ENCODE measurements at regions of chr2 and their contacts with region 1.

Region 1: DNA sequence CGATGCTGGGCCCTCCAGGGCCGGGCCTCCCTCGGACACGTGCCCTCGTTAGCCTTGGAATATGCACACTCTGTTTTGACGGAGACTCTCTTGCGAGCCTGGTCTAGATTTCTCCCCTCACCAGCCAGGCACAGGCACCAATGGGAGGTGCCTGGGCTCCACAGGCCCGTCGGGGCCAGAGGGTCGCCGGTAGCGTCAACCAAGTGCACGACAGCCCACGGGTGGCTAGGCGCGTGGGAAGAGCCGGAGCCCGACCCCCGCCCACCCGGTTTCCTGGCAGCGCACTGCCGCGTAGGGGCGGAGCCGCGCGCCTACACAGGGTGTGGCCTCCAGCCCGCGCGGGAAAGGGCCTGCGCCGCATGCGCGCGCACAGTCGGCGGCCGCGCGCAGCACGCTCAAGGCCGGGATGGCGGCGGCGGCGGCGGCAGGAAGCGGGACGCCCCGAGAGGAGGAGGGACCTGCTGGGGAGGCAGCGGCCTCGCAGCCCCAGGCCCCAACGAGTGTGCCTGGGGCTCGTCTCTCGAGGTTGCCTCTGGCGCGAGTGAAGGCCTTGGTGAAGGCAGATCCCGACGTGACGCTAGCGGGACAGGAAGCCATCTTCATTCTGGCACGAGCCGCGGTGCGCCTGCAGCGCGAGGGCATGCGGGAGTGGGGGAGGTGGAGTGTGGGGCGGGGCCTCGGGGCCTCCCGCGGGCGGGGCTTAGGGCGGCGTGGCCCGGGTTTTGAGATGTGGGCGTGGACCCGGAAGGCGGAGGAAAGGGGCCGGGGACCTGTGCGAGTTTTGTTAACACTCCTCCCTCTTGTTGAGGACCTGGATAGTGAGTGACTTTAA is at the start of gene POLE4:
- DNase-seq: peak; percentile 89 to 96 (median 95)
- ATAC-seq: peak; percentile 95
- H3K4me3 ChIP-seq: peak within 1 kb of the TSS; percentile 78
- H3K4me3 Mint-ChIP-seq: peak within 1 kb of the TSS; percentile 70 to 88 (median 85)
- H3K27ac ChIP-seq: peak within 1 kb of the TSS; percentile 87
- H3K27ac Mint-ChIP-seq: peak within 1 kb of the TSS; percentile 70 to 96 (median 89)
- H3K4me1 ChIP-seq: peaks cover 9 to 14% of the 10 kb centered on the region in 2 donors
- H3K4me1 Mint-ChIP-seq: peaks cover 30 to 87% (median 65%) of the 10 kb centered on the region in 7 donors
- H3K27me3 ChIP-seq: no peaks in the 10 kb centered on the region
- H3K27me3 Mint-ChIP-seq: no peaks in the 10 kb centered on the region
- total RNA-seq, gene POLE4: 37.8 to 49.1 (median 43.6) TPM

Region 2: DNA sequence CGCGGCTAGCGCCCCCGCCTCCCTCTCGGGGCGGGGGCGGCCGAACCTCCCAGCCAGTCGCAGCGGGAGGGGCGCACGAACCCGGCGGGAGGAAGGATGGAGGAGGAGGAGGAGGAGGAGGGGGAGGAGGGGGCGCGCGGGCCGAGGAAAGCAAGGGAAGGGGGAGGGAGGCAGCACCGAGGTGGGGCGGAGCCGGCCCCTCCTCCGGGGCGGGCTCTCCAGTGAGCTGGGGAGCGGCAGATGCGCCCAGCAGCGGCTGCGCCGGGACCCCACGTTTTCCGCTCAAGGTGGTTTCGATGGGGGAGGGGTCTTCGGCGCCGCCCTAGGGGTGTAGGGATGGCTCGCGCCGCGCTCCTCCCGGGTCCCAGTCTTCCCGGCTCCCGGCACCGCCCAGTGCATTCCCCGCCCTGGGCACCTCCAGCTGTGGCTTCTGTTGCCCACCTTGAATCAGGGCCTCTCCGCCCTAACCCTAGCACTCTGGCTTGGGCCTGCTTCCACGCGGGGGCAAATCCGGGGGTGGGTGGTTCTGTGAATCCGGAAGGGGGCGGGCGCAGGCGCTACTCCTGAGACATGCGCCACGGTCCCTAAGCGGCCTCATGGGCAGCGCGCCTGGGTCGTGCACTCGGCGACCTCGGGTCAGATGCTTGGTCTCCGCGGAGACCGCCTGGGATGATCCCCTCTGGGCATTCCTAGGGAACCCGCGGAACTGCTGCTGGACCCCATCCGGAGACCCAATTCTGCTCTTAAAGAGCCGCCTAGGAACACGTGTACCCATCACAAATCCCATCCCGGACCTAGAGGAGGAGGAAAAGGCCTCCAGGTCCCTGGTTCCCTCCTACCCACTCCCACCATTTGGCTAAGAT is 1674.0 kb before region 1 on chr2 and contains the start of gene FBXO41:
- CTCF ChIA-PET with region 1: no interaction called
- POLR2A ChIA-PET with region 1: no interaction called
- intact Hi-C with region 1: loop called (anchors 1 to 10 kb)
- DNase-seq: peak; percentile 43 to 79 (median 61)
- ATAC-seq: peak; percentile 81
- H3K4me3 ChIP-seq: peak within 1 kb of the TSS; percentile 69
- H3K4me3 Mint-ChIP-seq: peak within 1 kb of the TSS; percentile 72 to 91 (median 85)
- H3K27ac ChIP-seq: peak within 1 kb of the TSS; percentile 61
- H3K27ac Mint-ChIP-seq: peak within 1 kb of the TSS in 7 of 9 donors; percentile 32 to 87 (median 58)
- H3K4me1 ChIP-seq: peaks cover 12 to 14% of the 10 kb centered on the region in 2 donors
- H3K4me1 Mint-ChIP-seq: peaks cover 6 to 26% (median 19%) of the 10 kb centered on the region in 7 donors
- H3K27me3 ChIP-seq: no peaks in the 10 kb centered on the region
- H3K27me3 Mint-ChIP-seq: peaks cover 0 to 34% (median 14%) of the 10 kb centered on the region in 5 donors
- total RNA-seq, gene FBXO41: 13.2 to 19.6 (median 17.6) TPM

Region 3: GRCh38 chr2:74399785-74400184 is 558.7 kb before region 1 on chr2:
- CTCF ChIA-PET with region 1: no interaction called
- POLR2A ChIA-PET with region 1: no interaction called
- intact Hi-C with region 1: no loop called
- DNase-seq: peak in 5 of 9 donors; percentile 36 to 47 (median 42)
- ATAC-seq: peak; percentile 86
- H3K4me3 ChIP-seq: no peak overlapping the region
- H3K4me3 Mint-ChIP-seq: no peak overlapping the region
- H3K27ac ChIP-seq: no peak overlapping the region
- H3K27ac Mint-ChIP-seq: peak overlapping the region in 2 of 9 donors; percentile 8 to 28
- H3K4me1 ChIP-seq: no peaks in the 10 kb centered on the region
- H3K4me1 Mint-ChIP-seq: peaks cover 0 to 6% (median 5%) of the 10 kb centered on the region in 7 donors
- H3K27me3 ChIP-seq: no peaks in the 10 kb centered on the region
- H3K27me3 Mint-ChIP-seq: peaks cover 0 to 21% (median 4%) of the 10 kb centered on the region in 5 donors

Region 4: GRCh38 chr2:74653985-74654882 is 304.3 kb before region 1 on chr2 and contains the start of gene SEMA4F:
- CTCF ChIA-PET with region 1: no interaction called
- POLR2A ChIA-PET with region 1: no interaction called
- intact Hi-C with region 1: loop called (anchors 1 kb)
- DNase-seq: peak; percentile 85 to 95 (median 92)
- ATAC-seq: peak; percentile 100
- H3K4me3 ChIP-seq: peak within 1 kb of the TSS; percentile 86
- H3K4me3 Mint-ChIP-seq: peak within 1 kb of the TSS; percentile 82 to 97 (median 90)
- H3K27ac ChIP-seq: peak within 1 kb of the TSS; percentile 75
- H3K27ac Mint-ChIP-seq: peak within 1 kb of the TSS in 8 of 9 donors; percentile 59 to 96 (median 85)
- H3K4me1 ChIP-seq: peaks cover 6 to 8% of the 10 kb centered on the region in 2 donors
- H3K4me1 Mint-ChIP-seq: peaks cover 12 to 34% (median 23%) of the 10 kb centered on the region in 7 donors
- H3K27me3 ChIP-seq: no peaks in the 10 kb centered on the region
- H3K27me3 Mint-ChIP-seq: peaks cover 3 to 21% (median 5%) of the 10 kb centered on the region in 5 donors
- total RNA-seq, gene SEMA4F: 5.7 to 23.6 (median 11.0) TPM

Region 5: GRCh38 chr2:74845217-74846011 is 113.1 kb before region 1 on chr2:
- CTCF ChIA-PET with region 1: no interaction called
- POLR2A ChIA-PET with region 1: interaction called, 3 read pairs
- intact Hi-C with region 1: loop called in 1 of 2 experiments (anchors 1 kb)
- DNase-seq: peak in 2 of 9 donors; percentile 23 to 51
- ATAC-seq: peak; percentile 70
- H3K4me3 ChIP-seq: peak overlapping the region; percentile 29
- H3K4me3 Mint-ChIP-seq: peak overlapping the region; percentile 65 to 87 (median 78)
- H3K27ac ChIP-seq: peak overlapping the region; percentile 39
- H3K27ac Mint-ChIP-seq: peak overlapping the region; percentile 85 to 99 (median 94)
- H3K4me1 ChIP-seq: peaks cover 37 to 97% of the 10 kb centered on the region in 2 donors
- H3K4me1 Mint-ChIP-seq: peaks cover 75 to 100% (median 97%) of the 10 kb centered on the region in 7 donors
- H3K27me3 ChIP-seq: no peaks in the 10 kb centered on the region
- H3K27me3 Mint-ChIP-seq: no peaks in the 10 kb centered on the region

Region 6: DNA sequence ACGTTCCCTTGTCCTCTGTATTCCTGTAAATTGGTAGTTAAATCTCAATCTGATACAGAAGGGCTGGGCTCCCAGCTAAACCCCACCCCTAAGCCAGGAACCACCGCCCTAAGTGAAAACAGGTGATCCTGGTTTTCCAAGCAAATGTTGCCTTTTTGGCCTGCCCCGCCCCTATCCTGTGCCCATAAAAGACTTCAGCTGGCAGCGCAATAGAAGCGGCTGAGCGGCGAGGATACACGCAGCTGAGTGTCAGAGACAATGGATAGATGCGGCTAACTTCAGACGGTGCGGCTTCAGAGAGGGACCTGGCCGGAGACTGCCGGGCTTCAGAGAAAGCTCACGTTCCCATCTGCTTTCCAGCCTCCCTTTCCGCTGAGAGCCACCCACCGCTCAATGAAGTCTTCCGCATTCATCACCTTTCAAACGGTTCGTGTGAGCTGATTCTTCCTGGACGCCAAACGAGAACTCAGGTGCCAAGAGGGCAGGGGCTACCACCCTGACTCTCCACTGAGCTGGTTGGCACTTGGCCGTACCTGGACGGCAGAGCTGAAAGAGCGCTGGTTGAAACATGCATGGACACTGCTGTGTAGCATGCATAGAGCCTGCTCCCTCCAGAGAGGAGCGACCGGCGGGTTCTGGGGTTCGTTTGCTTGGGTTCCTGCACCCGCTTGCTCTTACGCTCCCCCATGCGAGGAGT is 49.6 kb before region 1 on chr2:
- CTCF ChIA-PET with region 1: no interaction called
- POLR2A ChIA-PET with region 1: no interaction called
- intact Hi-C with region 1: no loop called
- DNase-seq: no peak
- ATAC-seq: no peak
- H3K4me3 ChIP-seq: no peak overlapping the region
- H3K4me3 Mint-ChIP-seq: peak overlapping the region in 6 of 10 donors; percentile 33 to 64 (median 40)
- H3K27ac ChIP-seq: no peak overlapping the region
- H3K27ac Mint-ChIP-seq: no peak overlapping the region
- H3K4me1 ChIP-seq: peaks cover 0 to 4% of the 10 kb centered on the region in 2 donors
- H3K4me1 Mint-ChIP-seq: peaks cover 2 to 20% (median 14%) of the 10 kb centered on the region in 7 donors
- H3K27me3 ChIP-seq: peaks cover 0 to 5% of the 10 kb centered on the region in 2 donors
- H3K27me3 Mint-ChIP-seq: peaks cover 33 to 62% (median 46%) of the 10 kb centered on the region in 5 donors

Region 7: GRCh38 chr2:75021657-75022056 is 63.2 kb after region 1 on chr2:
- CTCF ChIA-PET with region 1: no interaction called
- POLR2A ChIA-PET with region 1: no interaction called
- intact Hi-C with region 1: no loop called
- DNase-seq: no peak
- ATAC-seq: no peak
- H3K4me3 ChIP-seq: no peak overlapping the region
- H3K4me3 Mint-ChIP-seq: no peak overlapping the region
- H3K27ac ChIP-seq: no peak overlapping the region
- H3K27ac Mint-ChIP-seq: no peak overlapping the region
- H3K4me1 ChIP-seq: no peaks in the 10 kb centered on the region
- H3K4me1 Mint-ChIP-seq: peaks cover 0 to 2% (median 0%) of the 10 kb centered on the region in 7 donors
- H3K27me3 ChIP-seq: no peaks in the 10 kb centered on the region
- H3K27me3 Mint-ChIP-seq: peaks cover 0 to 4% (median 0%) of the 10 kb centered on the region in 5 donors

Region 8: GRCh38 chr2:75173740-75174139 is 215.2 kb after region 1 on chr2:
- CTCF ChIA-PET with region 1: no interaction called
- POLR2A ChIA-PET with region 1: no interaction called
- intact Hi-C with region 1: no loop called
- DNase-seq: no peak
- ATAC-seq: no peak
- H3K4me3 ChIP-seq: no peak overlapping the region
- H3K4me3 Mint-ChIP-seq: no peak overlapping the region
- H3K27ac ChIP-seq: no peak overlapping the region
- H3K27ac Mint-ChIP-seq: no peak overlapping the region
- H3K4me1 ChIP-seq: no peaks in the 10 kb centered on the region
- H3K4me1 Mint-ChIP-seq: no peaks in the 10 kb centered on the region
- H3K27me3 ChIP-seq: no peaks in the 10 kb centered on the region
- H3K27me3 Mint-ChIP-seq: no peaks in the 10 kb centered on the region

Region 9: DNA sequence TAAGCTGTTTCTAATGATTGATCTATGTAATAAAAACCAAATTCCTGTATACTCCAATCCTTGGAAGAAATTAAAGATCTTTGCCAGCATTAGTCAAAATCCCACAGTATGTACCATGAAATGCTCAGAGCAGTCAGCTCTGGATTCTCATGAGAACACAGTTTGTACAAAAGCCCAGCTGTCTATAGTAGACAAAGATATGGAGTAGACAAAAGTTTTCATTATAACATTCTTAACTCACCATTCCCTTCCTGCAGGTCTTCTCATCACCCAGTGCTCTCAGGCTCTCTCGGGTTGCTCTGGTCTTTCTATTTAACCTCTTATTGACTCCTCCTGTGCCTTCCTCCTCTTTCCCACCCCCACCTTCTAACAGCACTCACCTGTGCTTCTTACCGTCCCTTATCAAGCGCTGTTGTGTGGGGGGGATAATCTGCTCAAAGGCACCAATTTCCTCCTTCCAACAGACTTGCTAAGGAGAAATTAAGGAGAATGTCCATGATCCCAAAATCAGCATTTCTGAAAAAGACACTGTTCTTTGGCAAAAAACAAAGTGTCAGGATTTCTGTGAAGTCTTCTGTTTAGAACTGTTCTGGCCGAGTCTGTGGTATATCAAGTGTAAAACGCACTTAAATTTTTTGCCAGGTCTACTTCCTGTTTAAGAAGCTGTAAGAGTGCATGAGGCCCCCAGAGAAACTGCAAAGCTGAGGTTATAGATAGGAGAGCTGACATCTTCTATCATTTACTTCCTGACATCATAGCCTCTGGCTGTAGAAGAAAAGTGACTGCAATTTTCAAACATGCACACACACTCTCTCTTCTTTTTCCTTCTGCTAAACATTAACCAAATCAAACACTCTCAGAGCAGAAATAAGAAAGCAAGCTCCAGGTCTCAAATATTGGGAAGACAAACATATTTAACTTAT is 458.2 kb after region 1 on chr2:
- CTCF ChIA-PET with region 1: no interaction called
- POLR2A ChIA-PET with region 1: interaction called, 3 read pairs
- intact Hi-C with region 1: loop called in 1 of 2 experiments (anchors 1 kb)
- DNase-seq: peak in 7 of 9 donors; percentile 35 to 71 (median 51)
- ATAC-seq: peak; percentile 70
- H3K4me3 ChIP-seq: peak overlapping the region; percentile 42
- H3K4me3 Mint-ChIP-seq: peak overlapping the region in 9 of 10 donors; percentile 87 to 96 (median 91)
- H3K27ac ChIP-seq: peak overlapping the region; percentile 62
- H3K27ac Mint-ChIP-seq: peak overlapping the region in 8 of 9 donors; percentile 87 to 95 (median 93)
- H3K4me1 ChIP-seq: peaks cover 0 to 10% of the 10 kb centered on the region in 2 donors
- H3K4me1 Mint-ChIP-seq: peaks cover 6 to 66% (median 33%) of the 10 kb centered on the region in 7 donors
- H3K27me3 ChIP-seq: no peaks in the 10 kb centered on the region
- H3K27me3 Mint-ChIP-seq: peaks cover 0 to 10% (median 0%) of the 10 kb centered on the region in 5 donors

Region 10: GRCh38 chr2:75710577-75711253 is 752.2 kb after region 1 on chr2 and contains the start of gene GCFC2:
- CTCF ChIA-PET with region 1: no interaction called
- POLR2A ChIA-PET with region 1: interaction called, 3 read pairs
- intact Hi-C with region 1: loop called (anchors 1 kb)
- DNase-seq: peak; percentile 70 to 91 (median 83)
- ATAC-seq: peak; percentile 91
- H3K4me3 ChIP-seq: peak within 1 kb of the TSS; percentile 78
- H3K4me3 Mint-ChIP-seq: peak within 1 kb of the TSS; percentile 72 to 98 (median 95)
- H3K27ac ChIP-seq: peak within 1 kb of the TSS; percentile 79
- H3K27ac Mint-ChIP-seq: peak within 1 kb of the TSS; percentile 96 to 98 (median 98)
- H3K4me1 ChIP-seq: peaks cover 0 to 13% of the 10 kb centered on the region in 2 donors
- H3K4me1 Mint-ChIP-seq: peaks cover 10 to 50% (median 33%) of the 10 kb centered on the region in 7 donors
- H3K27me3 ChIP-seq: no peaks in the 10 kb centered on the region
- H3K27me3 Mint-ChIP-seq: peaks cover 0 to 10% (median 4%) of the 10 kb centered on the region in 5 donors
- total RNA-seq, gene GCFC2: 15.8 to 29.1 (median 23.5) TPM

Measured in naive thymus-derived CD4-positive, alpha-beta T cell (primary cell).